ENCODE measurements at regions of chr22 and their contacts with region 1.

Region 1: DNA sequence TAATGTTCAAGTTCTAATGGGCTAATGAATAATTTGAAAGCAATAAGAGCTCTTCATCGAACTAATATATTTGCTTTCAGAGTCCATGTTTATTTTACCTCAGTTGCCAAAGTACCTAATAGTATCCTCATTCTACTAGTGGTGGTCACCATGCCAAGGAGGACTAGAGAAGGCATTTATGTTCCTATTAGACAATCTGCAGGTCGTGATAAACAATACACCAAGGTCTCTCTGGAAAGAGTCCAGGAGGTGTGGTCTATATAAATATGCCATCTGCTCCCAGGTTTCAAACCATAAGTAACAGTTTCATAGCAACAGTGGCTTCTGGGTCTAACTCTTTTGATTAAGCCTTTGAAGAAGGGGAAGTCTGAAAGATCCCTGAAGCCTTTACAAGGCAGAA is 42.9 kb downstream of the ARFGAP3 start:
- DNase-seq: no peak
- H3K4me3 ChIP-seq: no peak overlapping the region
- H3K27ac ChIP-seq: no peak overlapping the region
- H3K4me1 ChIP-seq: peaks cover 0 to 8% (median 3%) of the 10 kb centered on the region in 6 donors
- H3K27me3 ChIP-seq: no peaks in the 10 kb centered on the region
- CTCF ChIP-seq: no peak
- POLR2A ChIP-seq: no peak

Region 2: DNA sequence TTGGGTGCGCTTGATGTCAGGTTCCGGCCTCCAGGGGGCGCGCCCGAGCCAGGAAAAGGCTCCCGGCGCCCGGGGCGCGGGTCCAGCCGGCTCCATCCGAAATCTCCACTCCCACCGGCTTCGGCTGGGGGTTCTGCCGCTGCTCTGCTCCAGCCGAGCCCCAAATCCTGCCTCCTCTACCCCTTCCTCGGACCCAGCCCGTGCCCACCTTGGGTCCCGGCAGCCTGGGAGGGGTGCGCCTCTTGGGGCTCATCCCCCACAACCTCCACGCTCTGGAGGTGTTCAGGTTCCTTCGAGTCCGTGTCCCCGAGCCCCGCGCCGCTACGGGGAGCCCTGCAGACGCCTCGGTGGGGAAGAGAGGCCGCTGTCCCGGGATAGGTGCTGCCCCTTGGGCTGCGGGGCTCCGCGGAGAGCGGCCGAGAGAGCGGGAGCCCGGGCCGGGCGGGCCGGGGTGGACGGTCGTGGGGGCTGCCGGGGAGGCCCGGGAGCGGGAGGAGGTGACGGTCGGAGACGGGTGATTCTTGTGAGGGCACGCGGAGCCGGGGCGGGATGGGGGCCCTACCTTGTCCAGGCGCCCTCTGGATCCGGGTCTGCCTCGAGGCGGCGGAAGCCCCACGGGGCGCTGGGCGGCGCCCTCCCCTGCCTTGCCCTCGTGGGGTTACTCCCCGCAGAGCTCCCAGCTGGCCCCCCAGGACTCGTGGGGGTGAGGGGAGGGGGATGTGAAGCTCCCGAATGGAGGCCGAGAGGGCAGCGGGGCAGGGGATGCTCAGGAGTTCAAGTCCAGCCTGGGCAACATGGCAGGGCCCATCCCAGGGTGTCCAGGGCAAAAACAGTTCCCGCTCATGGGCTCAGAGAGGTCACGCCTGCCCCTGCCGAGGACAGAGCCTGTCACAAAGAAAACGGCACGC is 151.8 kb before region 1 on chr22:
- intact Hi-C with region 1: loop called (anchors 10 kb)
- DNase-seq: peak; percentile 95
- H3K4me3 ChIP-seq: peak overlapping the region; percentile 39 to 68 (median 50)
- H3K27ac ChIP-seq: peak overlapping the region in 4 of 8 donors; percentile 12 to 69 (median 28)
- H3K4me1 ChIP-seq: peaks cover 0 to 39% (median 23%) of the 10 kb centered on the region in 6 donors
- H3K27me3 ChIP-seq: peaks cover 0 to 9% (median 5%) of the 10 kb centered on the region in 7 donors
- CTCF ChIP-seq: peak; percentile 54 to 92 (median 76)
- POLR2A ChIP-seq: no peak

Region 3: GRCh38 chr22:43014316-43014868 is 200.2 kb after region 1 on chr22:
- intact Hi-C with region 1: no loop called
- DNase-seq: peak; percentile 91
- H3K4me3 ChIP-seq: peak overlapping the region; percentile 65 to 95 (median 82)
- H3K27ac ChIP-seq: peak overlapping the region in 7 of 8 donors; percentile 51 to 89 (median 82)
- H3K4me1 ChIP-seq: peaks cover 8 to 54% (median 28%) of the 10 kb centered on the region in 6 donors
- H3K27me3 ChIP-seq: no peaks in the 10 kb centered on the region
- CTCF ChIP-seq: no peak
- POLR2A ChIP-seq: no peak